ENCODE measurements at regions of chr5 and their contacts with region 1.

Region 1: DNA sequence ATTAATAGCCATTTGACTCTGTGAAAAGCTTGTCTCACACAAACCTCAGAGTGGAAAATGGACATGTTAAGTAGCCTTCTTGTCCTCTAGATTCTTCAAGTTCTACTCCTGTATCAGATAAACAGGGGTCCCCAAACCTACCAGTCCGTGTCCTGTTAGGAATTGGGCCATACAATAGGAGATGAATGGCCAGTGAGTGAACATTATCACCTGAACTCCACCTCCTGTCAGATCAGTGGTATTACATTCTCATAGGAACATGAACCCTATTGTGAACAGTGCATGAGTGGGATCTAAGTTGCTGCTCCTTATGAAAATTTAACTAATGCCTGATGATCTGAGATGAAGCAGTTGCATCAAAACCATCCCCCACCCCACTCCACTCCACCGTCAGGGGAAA is 136.3 kb downstream of the TMEM232 start:
- DNase-seq: peak; percentile 2
- ATAC-seq: peak; percentile 92
- H3K4me3 ChIP-seq: no peak overlapping the region
- H3K27ac ChIP-seq: no peak overlapping the region
- H3K4me1 ChIP-seq: no peaks in the 10 kb centered on the region
- H3K27me3 ChIP-seq: no peaks in the 10 kb centered on the region
- CTCF ChIP-seq: peak; percentile 23 to 52 (median 39); a peak in 5 of 6 replicates
- POLR2A ChIP-seq: no peak
- RAD21 ChIP-seq: peak; percentile 45

Region 2: GRCh38 chr5:110239786-110240185 is 350.4 kb before region 1 on chr5:
- CTCF ChIA-PET with region 1: no interaction called
- POLR2A ChIA-PET with region 1: no interaction called
- RAD21 ChIA-PET with region 1: no interaction called
- intact Hi-C with region 1: no loop called
- DNase-seq: no peak
- ATAC-seq: no peak
- H3K4me3 ChIP-seq: no peak overlapping the region
- H3K27ac ChIP-seq: no peak overlapping the region
- H3K4me1 ChIP-seq: no peaks in the 10 kb centered on the region
- H3K27me3 ChIP-seq: no peaks in the 10 kb centered on the region
- CTCF ChIP-seq: no peak
- POLR2A ChIP-seq: no peak
- RAD21 ChIP-seq: no peak

Region 3: GRCh38 chr5:110441035-110441434 is 149.2 kb before region 1 on chr5:
- CTCF ChIA-PET with region 1: no interaction called
- POLR2A ChIA-PET with region 1: no interaction called
- RAD21 ChIA-PET with region 1: no interaction called
- intact Hi-C with region 1: loop called (anchors 1 kb)
- DNase-seq: peak; percentile 31
- ATAC-seq: peak; percentile 81
- H3K4me3 ChIP-seq: no peak overlapping the region
- H3K27ac ChIP-seq: no peak overlapping the region
- H3K4me1 ChIP-seq: no peaks in the 10 kb centered on the region
- H3K27me3 ChIP-seq: no peaks in the 10 kb centered on the region
- CTCF ChIP-seq: peak; percentile 57 to 68 (median 59); a peak in 5 of 6 replicates
- POLR2A ChIP-seq: no peak
- RAD21 ChIP-seq: peak; percentile 71

Region 4: GRCh38 chr5:110625376-110625999 is 35.3 kb after region 1 on chr5:
- CTCF ChIA-PET with region 1: no interaction called
- POLR2A ChIA-PET with region 1: no interaction called
- RAD21 ChIA-PET with region 1: no interaction called
- intact Hi-C with region 1: no loop called
- DNase-seq: peak; percentile 22
- ATAC-seq: no peak
- H3K4me3 ChIP-seq: no peak overlapping the region
- H3K27ac ChIP-seq: no peak overlapping the region
- H3K4me1 ChIP-seq: no peaks in the 10 kb centered on the region
- H3K27me3 ChIP-seq: no peaks in the 10 kb centered on the region
- CTCF ChIP-seq: peak in 2 of 3 experiments; percentile 46 to 63; a peak in 3 of 6 replicates
- POLR2A ChIP-seq: no peak
- RAD21 ChIP-seq: peak; percentile 59

Measured in HCT116 (cell line).